Naive thymus-derived CD4-positive, alpha-beta T cell (primary cell): ENCODE measurements at regions of chr7 and their contacts with region 1.

Region 1: DNA sequence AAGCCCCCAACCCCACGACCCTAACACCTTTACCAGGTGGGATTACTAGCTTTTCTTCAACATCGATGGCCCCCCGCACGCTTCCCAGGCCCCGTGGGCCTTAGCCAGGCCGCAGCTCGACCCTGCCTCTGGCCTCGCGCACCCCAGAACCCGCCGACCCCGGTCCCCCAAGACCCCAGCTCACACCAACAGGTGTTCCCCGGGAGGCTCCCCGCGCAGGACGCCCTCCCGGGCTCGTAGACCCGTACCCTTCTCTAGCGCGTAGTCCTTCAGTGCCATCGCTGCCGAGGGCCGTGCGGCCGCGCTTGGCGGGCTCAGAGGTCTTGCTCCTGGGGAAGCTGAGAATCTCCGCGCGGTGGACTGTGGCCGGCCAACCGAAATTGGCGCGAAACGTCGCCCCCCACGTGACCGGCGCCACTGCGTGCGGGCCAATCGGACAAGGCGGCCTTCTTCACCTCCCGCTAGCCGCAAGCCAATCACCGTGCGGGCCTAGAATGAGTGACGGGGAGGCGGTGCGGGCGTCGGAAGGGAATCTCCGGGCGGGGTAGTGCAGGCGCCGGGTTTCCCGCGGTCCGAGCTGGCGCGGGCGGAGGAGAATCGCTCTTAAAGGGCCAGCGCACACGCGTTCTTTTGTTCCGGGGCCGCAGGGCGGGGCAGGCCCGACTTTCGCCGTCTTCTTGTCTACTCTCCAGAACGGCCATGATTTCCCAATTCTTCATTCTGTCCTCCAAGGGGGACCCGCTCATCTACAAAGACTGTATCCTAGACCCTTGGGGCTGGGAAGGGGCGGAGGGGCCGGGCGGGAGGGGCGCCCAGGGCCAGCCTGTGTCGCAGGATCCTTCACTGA is at the starts of genes AP4M1 and MCM7:
- DNase-seq: peak; percentile 84 to 98 (median 93)
- ATAC-seq: peak; percentile 90
- H3K4me3 ChIP-seq: peak within 1 kb of the TSS; percentile 98
- H3K4me3 Mint-ChIP-seq: peak within 1 kb of the TSS; percentile 85 to 95 (median 93)
- H3K27ac ChIP-seq: peak within 1 kb of the TSS; percentile 91
- H3K27ac Mint-ChIP-seq: peak within 1 kb of the TSS; percentile 90 to 98 (median 96)
- H3K4me1 ChIP-seq: peaks cover 17 to 25% of the 10 kb centered on the region in 2 donors
- H3K4me1 Mint-ChIP-seq: peaks cover 27 to 47% (median 41%) of the 10 kb centered on the region in 7 donors
- H3K27me3 ChIP-seq: no peaks in the 10 kb centered on the region
- H3K27me3 Mint-ChIP-seq: no peaks in the 10 kb centered on the region
- total RNA-seq, gene AP4M1: 7.5 to 13.8 (median 11.0) TPM
- total RNA-seq, gene MCM7: 80.3 to 263 (median 168) TPM

Region 2: DNA sequence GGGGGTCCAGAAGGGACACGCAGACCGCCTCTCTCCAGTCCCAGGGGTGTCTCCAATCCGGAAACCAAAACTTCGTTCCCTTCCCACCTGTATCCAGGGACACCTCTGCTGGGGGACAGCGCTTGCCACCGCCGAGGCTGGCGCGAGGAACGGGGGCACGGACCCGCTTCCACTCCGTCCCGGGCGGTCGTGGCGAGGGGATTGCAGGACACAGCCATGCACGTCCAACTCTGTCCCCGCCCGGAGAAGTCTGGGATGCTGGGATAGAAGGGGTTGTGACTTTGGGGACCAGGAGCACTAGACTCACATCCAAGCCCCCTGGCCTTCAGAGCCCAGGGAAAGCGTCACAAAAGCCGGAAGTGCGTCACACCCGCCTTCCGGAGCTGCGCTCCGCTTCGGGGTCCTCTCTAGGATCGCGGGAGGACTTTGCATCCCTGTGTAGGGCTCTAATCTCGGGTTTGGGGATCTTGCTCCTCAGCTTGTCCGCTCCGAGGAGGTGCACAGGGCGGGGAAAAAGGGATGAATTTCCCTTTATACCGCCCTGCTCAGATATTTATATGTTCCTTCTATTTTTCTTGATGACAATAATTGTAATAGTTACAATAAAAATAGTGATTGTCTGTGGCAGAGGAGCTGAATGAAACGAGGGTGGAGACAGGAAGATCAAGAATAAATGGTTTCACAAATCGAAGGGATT is 549.3 kb before region 1 on chr7 and contains the start of gene FAM200A:
- CTCF ChIA-PET with region 1: no interaction called
- POLR2A ChIA-PET with region 1: no interaction called
- intact Hi-C with region 1: loop called in 1 of 2 experiments (anchors 10 kb)
- DNase-seq: peak; percentile 62 to 88 (median 83)
- ATAC-seq: peak; percentile 99
- H3K4me3 ChIP-seq: peak within 1 kb of the TSS; percentile 93
- H3K4me3 Mint-ChIP-seq: peak within 1 kb of the TSS; percentile 85 to 95 (median 90)
- H3K27ac ChIP-seq: peak within 1 kb of the TSS; percentile 95
- H3K27ac Mint-ChIP-seq: peak within 1 kb of the TSS; percentile 73 to 98 (median 95)
- H3K4me1 ChIP-seq: peaks cover 17 to 23% of the 10 kb centered on the region in 2 donors
- H3K4me1 Mint-ChIP-seq: peaks cover 23 to 62% (median 48%) of the 10 kb centered on the region in 7 donors
- H3K27me3 ChIP-seq: no peaks in the 10 kb centered on the region
- H3K27me3 Mint-ChIP-seq: no peaks in the 10 kb centered on the region
- total RNA-seq, gene FAM200A: 1.9 to 13.6 (median 5.0) TPM

Region 3: GRCh38 chr7:100066953-100067352 is 34.3 kb before region 1 on chr7:
- CTCF ChIA-PET with region 1: no interaction called
- POLR2A ChIA-PET with region 1: no interaction called
- intact Hi-C with region 1: no loop called
- DNase-seq: no peak
- ATAC-seq: no peak
- H3K4me3 ChIP-seq: no peak overlapping the region
- H3K4me3 Mint-ChIP-seq: no peak overlapping the region
- H3K27ac ChIP-seq: no peak overlapping the region
- H3K27ac Mint-ChIP-seq: no peak overlapping the region
- H3K4me1 ChIP-seq: no peaks in the 10 kb centered on the region
- H3K4me1 Mint-ChIP-seq: no peaks in the 10 kb centered on the region
- H3K27me3 ChIP-seq: no peaks in the 10 kb centered on the region
- H3K27me3 Mint-ChIP-seq: no peaks in the 10 kb centered on the region

Region 4: GRCh38 chr7:100081535-100082102 is 19.6 kb before region 1 on chr7 and contains the start of gene ZNF3:
- CTCF ChIA-PET with region 1: no interaction called
- POLR2A ChIA-PET with region 1: interaction called, 59 read pairs
- intact Hi-C with region 1: loop called (anchors 1 kb)
- DNase-seq: peak; percentile 87 to 98 (median 97)
- ATAC-seq: peak; percentile 94
- H3K4me3 ChIP-seq: peak within 1 kb of the TSS; percentile 78
- H3K4me3 Mint-ChIP-seq: peak within 1 kb of the TSS; percentile 89 to 96 (median 92)
- H3K27ac ChIP-seq: peak within 1 kb of the TSS; percentile 82
- H3K27ac Mint-ChIP-seq: peak within 1 kb of the TSS; percentile 64 to 98 (median 91)
- H3K4me1 ChIP-seq: peaks cover 5 to 18% of the 10 kb centered on the region in 2 donors
- H3K4me1 Mint-ChIP-seq: peaks cover 26 to 46% (median 41%) of the 10 kb centered on the region in 7 donors
- H3K27me3 ChIP-seq: no peaks in the 10 kb centered on the region
- H3K27me3 Mint-ChIP-seq: peaks cover 0 to 19% (median 0%) of the 10 kb centered on the region in 5 donors
- total RNA-seq, gene ZNF3: 29.1 to 48.0 (median 35.0) TPM

Region 5: DNA sequence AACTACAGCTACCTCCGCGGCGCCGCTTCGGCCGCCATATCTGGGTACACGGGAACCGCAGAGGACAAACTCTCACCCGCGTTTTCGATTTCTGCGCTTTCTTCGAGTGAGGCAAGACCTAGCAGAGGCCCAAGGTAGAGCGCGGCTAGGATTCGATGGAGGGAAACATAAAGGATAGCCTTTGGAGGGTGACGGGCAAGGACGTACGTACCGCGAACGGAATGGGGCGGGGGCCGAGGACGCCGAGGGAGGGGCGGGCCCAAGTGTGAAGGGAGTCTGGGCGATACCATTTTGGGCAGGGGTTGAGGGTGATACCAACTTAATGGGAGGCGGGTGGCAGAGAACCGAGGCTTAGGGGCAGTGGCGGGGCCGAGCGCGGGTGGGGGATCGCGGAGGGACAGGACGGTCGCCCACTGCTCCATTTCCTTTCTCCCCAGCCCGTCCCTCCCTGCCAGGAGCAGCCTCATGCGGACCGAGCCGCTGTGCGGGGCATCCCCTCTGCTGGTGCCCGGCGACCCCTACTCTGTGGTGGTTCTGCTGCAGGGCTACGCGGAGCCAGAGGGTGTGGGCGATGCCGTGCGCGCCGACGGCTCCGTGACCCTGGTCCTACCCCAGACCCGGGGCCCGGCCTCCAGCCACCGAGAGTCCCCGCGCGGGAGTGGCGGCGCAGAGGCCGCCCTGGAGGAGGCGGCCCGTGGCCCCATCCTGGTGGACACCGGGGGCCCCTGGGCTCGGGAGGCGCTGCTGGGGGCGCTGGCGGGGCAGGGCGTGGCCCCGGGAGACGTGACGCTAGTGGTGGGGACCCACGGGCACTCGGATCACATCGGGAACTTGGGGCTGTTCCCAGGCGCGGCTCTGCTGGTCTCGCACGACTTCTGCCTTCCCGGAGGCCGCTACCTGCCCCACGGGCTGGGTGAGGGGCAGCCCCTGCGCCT is 26.0 kb after region 1 on chr7 and contains the start of gene MBLAC1:
- CTCF ChIA-PET with region 1: interaction called, 4 read pairs
- POLR2A ChIA-PET with region 1: interaction called, 107 read pairs
- intact Hi-C with region 1: loop called (anchors 1 kb)
- DNase-seq: peak; percentile 80 to 95 (median 91)
- ATAC-seq: peak; percentile 95
- H3K4me3 ChIP-seq: peak within 1 kb of the TSS; percentile 99
- H3K4me3 Mint-ChIP-seq: peak within 1 kb of the TSS; percentile 95 to 100 (median 98)
- H3K27ac ChIP-seq: peak within 1 kb of the TSS; percentile 98
- H3K27ac Mint-ChIP-seq: peak within 1 kb of the TSS; percentile 98 to 100 (median 99)
- H3K4me1 ChIP-seq: peaks cover 20 to 25% of the 10 kb centered on the region in 2 donors
- H3K4me1 Mint-ChIP-seq: peaks cover 13 to 46% (median 26%) of the 10 kb centered on the region in 7 donors
- H3K27me3 ChIP-seq: no peaks in the 10 kb centered on the region
- H3K27me3 Mint-ChIP-seq: no peaks in the 10 kb centered on the region
- total RNA-seq, gene MBLAC1: 4.5 to 6.3 (median 5.8) TPM

Region 6: DNA sequence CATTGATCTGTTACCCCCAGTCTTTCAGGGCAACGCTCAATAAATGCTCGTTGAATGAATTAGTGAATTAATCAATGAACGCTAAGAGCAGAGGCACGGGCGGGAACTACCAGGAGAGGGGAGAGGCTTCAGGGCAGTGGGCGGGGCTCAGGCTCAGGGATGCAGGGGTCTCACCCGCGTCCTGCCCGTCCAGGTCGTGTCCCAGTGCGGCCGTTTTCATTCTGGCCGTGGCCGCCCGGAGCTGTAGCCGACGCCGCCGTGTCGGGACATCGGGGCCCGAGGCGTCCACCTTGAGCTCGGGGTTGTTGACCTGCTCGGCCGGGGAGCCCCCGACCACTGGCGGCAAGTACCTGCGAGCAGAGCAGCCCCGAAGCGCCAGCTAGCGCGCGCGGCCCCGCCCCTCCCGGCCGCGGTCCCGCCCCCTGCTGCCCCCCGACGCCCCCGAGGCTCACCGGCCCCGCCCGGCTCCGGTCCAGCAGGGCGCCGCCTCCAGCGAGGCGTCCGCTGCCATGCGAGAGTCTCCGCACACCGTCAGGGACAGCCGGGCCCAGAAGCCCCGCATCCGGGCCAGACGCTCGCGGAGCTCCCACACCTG is 69.9 kb after region 1 on chr7:
- CTCF ChIA-PET with region 1: no interaction called
- POLR2A ChIA-PET with region 1: no interaction called
- intact Hi-C with region 1: loop called in 1 of 2 experiments (anchors 2 kb)
- DNase-seq: peak in 3 of 9 donors; percentile 23 to 38 (median 25)
- ATAC-seq: peak; percentile 40
- H3K4me3 ChIP-seq: peak overlapping the region; percentile 56
- H3K4me3 Mint-ChIP-seq: peak overlapping the region; percentile 65 to 95 (median 90)
- H3K27ac ChIP-seq: peak overlapping the region; percentile 81
- H3K27ac Mint-ChIP-seq: peak overlapping the region in 8 of 9 donors; percentile 86 to 99 (median 95)
- H3K4me1 ChIP-seq: peaks cover 21 to 52% of the 10 kb centered on the region in 2 donors
- H3K4me1 Mint-ChIP-seq: peaks cover 51 to 78% (median 66%) of the 10 kb centered on the region in 7 donors
- H3K27me3 ChIP-seq: no peaks in the 10 kb centered on the region
- H3K27me3 Mint-ChIP-seq: peaks cover 0 to 27% (median 5%) of the 10 kb centered on the region in 5 donors

Region 7: DNA sequence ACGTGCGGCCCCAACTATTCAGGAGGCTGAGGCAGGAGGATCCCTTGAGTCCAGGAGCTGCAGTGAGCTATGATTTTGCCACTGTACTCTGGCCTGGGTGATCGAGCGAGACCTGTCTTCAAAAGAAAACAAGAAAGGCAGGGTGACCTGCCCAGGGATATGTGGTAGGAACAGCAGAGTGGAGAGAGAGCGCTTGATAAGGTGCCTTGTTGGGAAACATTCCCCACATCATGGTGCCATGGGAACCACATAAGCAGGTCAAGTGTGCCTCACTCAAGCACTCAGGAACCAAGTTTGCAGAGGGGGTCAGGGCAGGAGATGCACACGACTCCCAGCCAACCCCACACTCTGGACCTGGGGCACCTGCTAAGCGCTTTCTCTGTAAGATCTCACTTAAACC is 155.8 kb after region 1 on chr7:
- CTCF ChIA-PET with region 1: no interaction called
- POLR2A ChIA-PET with region 1: no interaction called
- intact Hi-C with region 1: no loop called
- DNase-seq: no peak
- ATAC-seq: no peak
- H3K4me3 ChIP-seq: no peak overlapping the region
- H3K4me3 Mint-ChIP-seq: no peak overlapping the region
- H3K27ac ChIP-seq: no peak overlapping the region
- H3K27ac Mint-ChIP-seq: no peak overlapping the region
- H3K4me1 ChIP-seq: no peaks in the 10 kb centered on the region
- H3K4me1 Mint-ChIP-seq: peaks cover 0 to 4% (median 0%) of the 10 kb centered on the region in 7 donors
- H3K27me3 ChIP-seq: no peaks in the 10 kb centered on the region
- H3K27me3 Mint-ChIP-seq: no peaks in the 10 kb centered on the region

Region 8: GRCh38 chr7:100673300-100673941 is 572.2 kb after region 1 on chr7 and contains the start of gene GNB2:
- CTCF ChIA-PET with region 1: no interaction called
- POLR2A ChIA-PET with region 1: no interaction called
- intact Hi-C with region 1: loop called in 1 of 2 experiments (anchors 5 kb)
- DNase-seq: peak; percentile 92 to 100 (median 96)
- ATAC-seq: peak; percentile 75
- H3K4me3 ChIP-seq: peak within 1 kb of the TSS; percentile 82
- H3K4me3 Mint-ChIP-seq: peak within 1 kb of the TSS; percentile 89 to 99 (median 96)
- H3K27ac ChIP-seq: peak within 1 kb of the TSS; percentile 98
- H3K27ac Mint-ChIP-seq: peak within 1 kb of the TSS; percentile 88 to 97 (median 95)
- H3K4me1 ChIP-seq: no peaks in the 10 kb centered on the region
- H3K4me1 Mint-ChIP-seq: peaks cover 9 to 25% (median 15%) of the 10 kb centered on the region in 7 donors
- H3K27me3 ChIP-seq: no peaks in the 10 kb centered on the region
- H3K27me3 Mint-ChIP-seq: peaks cover 0 to 17% (median 0%) of the 10 kb centered on the region in 5 donors
- total RNA-seq, gene GNB2: 98.2 to 215 (median 132) TPM